ENCODE measurements at regions of chr7 and their contacts with region 1.

Region 1: DNA sequence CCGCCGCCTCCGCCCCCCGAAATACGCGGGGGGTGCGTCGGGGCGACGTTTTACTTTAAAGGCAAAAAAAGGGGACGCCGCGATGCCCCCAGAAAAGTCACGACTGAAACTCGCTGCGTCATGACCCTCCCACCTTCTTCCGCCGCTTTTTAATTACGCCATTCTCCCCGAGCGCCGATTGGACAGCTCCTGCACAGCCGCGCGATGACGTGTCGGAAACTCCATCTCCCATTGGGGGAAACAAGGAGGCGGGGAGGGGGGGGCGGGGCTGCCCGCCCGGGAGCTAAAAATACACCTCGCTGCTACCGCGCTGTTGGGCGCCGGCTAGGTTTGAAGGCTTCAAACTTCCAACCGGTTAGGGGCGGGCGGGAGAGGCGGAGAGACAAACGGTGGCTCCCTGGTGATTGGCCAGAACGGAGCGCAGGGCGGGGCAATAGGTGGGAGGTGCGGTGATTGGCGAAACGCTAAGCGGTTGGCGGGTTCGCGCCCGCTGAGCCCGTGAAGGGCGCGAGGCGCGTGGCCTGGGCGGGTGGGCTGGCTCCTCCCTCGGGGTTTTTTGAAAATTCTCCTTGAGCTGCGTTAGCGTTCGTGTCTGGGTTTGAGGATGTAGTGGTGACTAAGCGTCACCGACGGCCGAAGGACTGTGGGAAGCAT is at the start of gene RHEB:
- DNase-seq: peak; percentile 99
- H3K4me3 Mint-ChIP-seq: peak within 1 kb of the TSS; percentile 97
- H3K27ac Mint-ChIP-seq: peak within 1 kb of the TSS; percentile 97
- H3K4me1 Mint-ChIP-seq: peaks cover 36% of the 10 kb centered on the region
- H3K27me3 Mint-ChIP-seq: peaks cover 9% of the 10 kb centered on the region
- total RNA-seq, gene RHEB: 55.4 and 62.5 TPM in 2 replicates

Region 2: GRCh38 chr7:151351027-151351426 is 168.9 kb before region 1 on chr7:
- intact Hi-C with region 1: loop called (anchors 5 kb)
- DNase-seq: peak; percentile 78
- H3K4me3 Mint-ChIP-seq: peak overlapping the region; percentile 80
- H3K27ac Mint-ChIP-seq: peak overlapping the region; percentile 93
- H3K4me1 Mint-ChIP-seq: peaks cover 40% of the 10 kb centered on the region
- H3K27me3 Mint-ChIP-seq: no peaks in the 10 kb centered on the region

Region 3: DNA sequence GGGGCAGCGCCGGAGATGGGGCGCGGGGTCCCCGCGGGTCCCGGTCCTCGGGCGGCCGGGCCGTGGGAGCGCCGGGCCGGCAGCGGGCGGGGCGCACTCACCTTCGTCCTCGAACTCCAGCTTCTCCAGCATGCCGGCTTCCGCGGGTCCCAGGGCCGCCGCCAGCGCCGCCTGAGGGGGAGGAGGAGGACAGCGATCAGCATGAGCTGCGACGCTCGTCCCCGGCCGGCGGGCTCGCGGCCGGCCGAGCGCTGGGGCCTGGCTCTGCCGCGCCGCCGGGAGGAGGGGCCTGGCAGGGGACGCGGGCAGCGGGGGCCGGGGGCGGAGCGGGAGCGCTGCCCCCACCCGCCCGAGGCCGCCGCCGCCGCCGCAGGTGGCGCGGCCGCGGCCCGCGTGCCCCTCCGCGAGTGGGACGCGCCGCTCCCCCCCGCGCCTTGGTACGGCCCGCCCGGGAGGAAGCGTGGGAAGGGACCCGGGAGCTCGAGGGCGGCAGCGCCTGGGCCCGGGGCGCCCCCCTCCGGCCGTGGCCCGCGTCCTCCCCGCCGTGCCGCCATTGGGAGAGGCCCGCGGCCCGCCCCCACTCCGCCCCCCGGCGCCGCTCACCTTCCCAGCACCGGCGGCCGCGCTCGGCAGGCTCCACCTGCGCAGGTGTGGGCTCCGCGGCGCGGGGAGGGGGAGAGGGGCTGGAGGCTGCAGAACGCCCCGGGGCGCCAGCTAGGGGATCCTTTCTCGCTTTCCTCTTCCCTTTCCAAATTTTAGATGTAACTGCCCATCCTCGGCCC is 112.3 kb after region 1 on chr7:
- intact Hi-C with region 1: loop called (anchors 1 kb)
- DNase-seq: peak; percentile 97
- H3K4me3 Mint-ChIP-seq: peak overlapping the region; percentile 96
- H3K27ac Mint-ChIP-seq: peak overlapping the region; percentile 99
- H3K4me1 Mint-ChIP-seq: peaks cover 24% of the 10 kb centered on the region
- H3K27me3 Mint-ChIP-seq: peaks cover 2% of the 10 kb centered on the region

Region 4: DNA sequence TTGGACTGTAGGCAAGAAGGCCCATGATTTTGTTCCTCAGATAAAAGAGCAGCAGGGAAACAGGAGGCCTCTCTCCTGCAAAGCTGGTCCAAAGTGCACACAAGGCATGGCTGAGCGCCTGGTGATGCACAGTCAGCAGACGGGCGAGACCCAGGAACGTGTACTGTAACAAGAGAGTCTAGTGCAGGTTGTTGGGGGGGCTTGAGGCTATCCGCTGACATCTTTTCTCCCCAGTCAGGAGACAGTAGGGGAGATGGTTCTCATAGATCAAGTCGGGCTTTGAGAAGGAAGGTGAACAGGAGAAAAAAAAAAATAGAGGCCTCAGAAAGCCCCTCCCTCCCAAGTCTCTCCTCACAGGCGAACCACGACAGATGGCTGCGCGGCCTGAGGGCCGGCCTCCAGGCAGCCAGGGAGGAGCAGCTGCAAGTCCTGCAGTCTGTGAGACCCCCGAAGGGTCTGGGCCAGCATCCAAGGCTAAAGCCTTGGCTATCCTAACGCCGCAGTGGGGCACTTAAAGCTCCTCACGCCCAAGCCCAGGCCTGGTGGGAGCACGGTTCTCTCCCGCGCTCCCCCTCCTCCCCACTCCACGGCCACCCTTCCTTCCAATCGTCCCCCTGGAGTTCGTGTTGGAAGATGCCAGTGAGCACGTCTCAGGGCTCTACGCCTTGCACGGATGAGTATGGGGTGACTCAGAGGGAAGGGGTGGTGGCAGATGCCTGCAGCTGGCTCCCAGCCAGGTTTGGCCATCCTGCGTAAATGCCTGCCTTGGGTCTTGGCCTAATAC is 288.7 kb after region 1 on chr7:
- intact Hi-C with region 1: no loop called
- DNase-seq: no peak
- H3K4me3 Mint-ChIP-seq: no peak overlapping the region
- H3K27ac Mint-ChIP-seq: no peak overlapping the region
- H3K4me1 Mint-ChIP-seq: no peaks in the 10 kb centered on the region
- H3K27me3 Mint-ChIP-seq: no peaks in the 10 kb centered on the region

Region 5: DNA sequence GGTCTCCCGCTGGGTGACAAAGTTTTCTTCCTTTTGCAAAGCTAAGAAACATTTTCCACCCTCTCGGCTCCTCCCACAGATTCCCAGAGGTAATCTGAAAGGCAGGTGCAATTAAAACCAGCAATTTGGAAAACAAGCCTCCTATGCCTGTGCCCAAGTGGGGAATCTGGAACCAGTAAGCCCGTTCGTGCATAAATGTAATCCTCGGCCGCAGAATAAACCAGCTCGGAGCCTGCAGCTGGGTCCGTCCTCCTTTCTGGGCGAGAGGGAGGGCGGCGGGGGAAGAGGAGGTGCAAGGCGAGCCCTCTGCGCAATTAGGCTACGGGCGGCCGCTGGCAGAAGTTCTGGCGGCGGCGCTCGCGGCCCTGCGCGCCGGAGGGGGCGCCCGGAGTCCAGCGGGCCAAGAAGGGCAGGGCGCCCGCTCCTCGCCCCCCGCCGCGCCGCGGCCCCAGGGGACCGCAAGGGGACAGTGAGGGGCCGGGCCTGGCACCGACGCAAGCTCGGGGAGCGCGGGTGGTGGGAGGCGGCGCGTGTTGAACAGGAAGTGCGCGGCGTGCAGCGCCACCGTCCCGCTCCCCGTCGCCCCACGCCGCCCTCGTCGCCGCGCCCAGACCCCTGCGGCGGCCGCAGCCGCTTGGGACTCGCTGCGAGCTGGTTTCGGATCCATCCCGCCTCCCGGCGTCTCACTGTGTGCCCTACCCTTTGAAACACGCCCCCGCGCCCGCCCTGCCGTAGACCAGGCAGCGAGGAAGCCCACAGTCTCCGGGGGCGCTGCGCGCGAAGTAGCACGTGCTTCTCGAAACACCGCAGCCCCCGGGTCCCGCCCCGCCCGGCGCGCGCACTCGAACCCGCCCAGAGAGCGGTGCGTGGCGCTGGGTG is 357.2 kb after region 1 on chr7 and contains the start of gene PRKAG2:
- intact Hi-C with region 1: loop called (anchors 1 kb)
- DNase-seq: peak; percentile 86
- H3K4me3 Mint-ChIP-seq: peak within 1 kb of the TSS; percentile 94
- H3K27ac Mint-ChIP-seq: peak within 1 kb of the TSS; percentile 88
- H3K4me1 Mint-ChIP-seq: peaks cover 6% of the 10 kb centered on the region
- H3K27me3 Mint-ChIP-seq: peaks cover 33% of the 10 kb centered on the region
- total RNA-seq, gene PRKAG2: 14.3 and 15.5 TPM in 2 replicates

Region 6: DNA sequence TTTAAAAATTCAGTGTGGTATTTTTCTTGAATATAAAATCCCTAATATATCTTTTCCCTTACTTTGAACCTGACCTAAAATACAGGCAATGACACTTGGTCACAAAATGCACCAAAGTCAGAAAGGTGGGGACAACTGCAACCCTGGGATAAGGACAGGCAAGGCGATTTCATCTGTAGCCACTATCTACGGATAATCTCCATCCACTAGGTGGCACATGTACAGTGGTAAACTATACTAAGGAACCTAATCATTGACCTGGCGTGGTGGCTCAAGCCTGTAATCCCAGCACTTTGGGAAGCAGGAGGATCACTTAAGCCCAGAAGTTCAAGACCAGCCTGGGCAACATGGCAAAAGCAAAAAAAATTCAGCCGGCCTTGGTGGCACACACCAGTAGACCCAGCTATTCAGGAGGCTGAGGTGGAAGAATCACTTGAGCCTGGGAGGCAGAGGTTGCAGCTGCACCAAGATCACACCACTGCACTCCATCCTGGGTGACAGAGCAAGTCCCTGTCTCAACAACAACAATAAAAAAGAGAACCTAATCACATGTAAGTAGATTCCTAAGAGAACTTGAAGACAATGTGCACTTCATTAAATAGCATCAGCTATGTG is 817.0 kb after region 1 on chr7:
- intact Hi-C with region 1: loop called (anchors 10 kb)
- DNase-seq: peak; percentile 76
- H3K4me3 Mint-ChIP-seq: peak overlapping the region; percentile 70
- H3K27ac Mint-ChIP-seq: peak overlapping the region; percentile 64
- H3K4me1 Mint-ChIP-seq: peaks cover 27% of the 10 kb centered on the region
- H3K27me3 Mint-ChIP-seq: no peaks in the 10 kb centered on the region